Activated CD4-positive, alpha-beta T cell treated with anti-CD3 and anti-CD28 coated beads for 36 hours (primary cell): ENCODE measurements at regions of chr2 and their contacts with region 1.

Region 1: DNA sequence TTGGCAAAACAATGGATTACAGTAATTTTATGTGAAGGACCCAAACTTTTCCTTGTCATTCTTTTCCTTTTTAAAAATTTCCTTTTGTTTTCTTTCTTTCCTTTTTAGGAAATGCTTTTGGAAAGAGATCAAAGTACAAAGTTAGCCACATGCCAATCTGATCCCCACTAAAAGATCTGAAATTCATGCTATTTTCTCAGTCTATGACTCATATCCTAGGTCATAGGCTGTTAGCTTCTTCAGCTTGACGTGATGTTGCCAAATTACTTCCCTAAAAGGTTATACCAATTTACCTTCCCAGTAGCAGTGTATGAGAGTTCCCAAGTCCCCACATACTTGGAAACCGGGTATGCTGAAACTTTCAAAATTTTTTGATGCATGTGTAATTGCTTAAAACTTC is 355.3 kb downstream of the INSIG2 start:
- DNase-seq: no peak
- ATAC-seq: no peak
- H3K4me3 Mint-ChIP-seq: no peak overlapping the region
- H3K27ac Mint-ChIP-seq: no peak overlapping the region
- H3K4me1 Mint-ChIP-seq: no peaks in the 10 kb centered on the region
- H3K27me3 Mint-ChIP-seq: peaks cover 23% of the 10 kb centered on the region

Region 2: GRCh38 chr2:118417406-118418120 is 26.0 kb before region 1 on chr2:
- CTCF ChIA-PET with region 1: no interaction called
- POLR2A ChIA-PET with region 1: no interaction called
- intact Hi-C with region 1: loop called in 1 of 2 experiments (anchors 1 kb)
- DNase-seq: no peak
- ATAC-seq: no peak
- H3K4me3 Mint-ChIP-seq: no peak overlapping the region
- H3K27ac Mint-ChIP-seq: no peak overlapping the region
- H3K4me1 Mint-ChIP-seq: no peaks in the 10 kb centered on the region
- H3K27me3 Mint-ChIP-seq: peaks cover 15% of the 10 kb centered on the region